Heart right ventricle (tissue), 16 donors: ENCODE measurements at regions of chr4 and their contacts with region 1.

Region 1: DNA sequence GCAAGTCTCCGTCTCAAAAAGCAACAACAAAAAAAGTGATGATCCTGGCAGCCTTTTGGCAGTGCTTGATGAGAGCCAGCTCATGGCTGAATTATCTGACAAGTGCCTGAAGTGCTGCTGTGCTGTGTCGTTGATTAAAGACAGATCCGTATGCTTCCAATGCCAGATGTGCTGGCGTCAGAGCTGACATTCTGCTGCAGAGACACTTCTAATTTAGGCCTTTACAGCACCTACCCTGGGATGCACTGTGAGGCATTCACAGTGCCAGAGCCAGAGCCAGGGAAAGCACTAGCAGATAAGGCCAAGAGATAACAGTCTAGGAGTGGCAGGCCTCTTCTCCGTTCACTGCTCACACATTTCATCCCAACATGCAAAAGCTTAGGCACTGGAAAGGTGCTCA is 995.5 kb downstream of the RAB28 start:
- DNase-seq: peak; percentile 48 to 74
- ATAC-seq: peak; percentile 88 to 99 (median 98)
- H3K4me3 ChIP-seq: no peak overlapping the region
- H3K27ac ChIP-seq: peak overlapping the region in 9 of 10 donors; percentile 55 to 78 (median 66)
- H3K4me1 ChIP-seq: peaks cover 0 to 18% (median 2%) of the 10 kb centered on the region in 9 donors
- H3K27me3 ChIP-seq: no peaks in the 10 kb centered on the region
- CTCF ChIP-seq: no peak

Region 2: DNA sequence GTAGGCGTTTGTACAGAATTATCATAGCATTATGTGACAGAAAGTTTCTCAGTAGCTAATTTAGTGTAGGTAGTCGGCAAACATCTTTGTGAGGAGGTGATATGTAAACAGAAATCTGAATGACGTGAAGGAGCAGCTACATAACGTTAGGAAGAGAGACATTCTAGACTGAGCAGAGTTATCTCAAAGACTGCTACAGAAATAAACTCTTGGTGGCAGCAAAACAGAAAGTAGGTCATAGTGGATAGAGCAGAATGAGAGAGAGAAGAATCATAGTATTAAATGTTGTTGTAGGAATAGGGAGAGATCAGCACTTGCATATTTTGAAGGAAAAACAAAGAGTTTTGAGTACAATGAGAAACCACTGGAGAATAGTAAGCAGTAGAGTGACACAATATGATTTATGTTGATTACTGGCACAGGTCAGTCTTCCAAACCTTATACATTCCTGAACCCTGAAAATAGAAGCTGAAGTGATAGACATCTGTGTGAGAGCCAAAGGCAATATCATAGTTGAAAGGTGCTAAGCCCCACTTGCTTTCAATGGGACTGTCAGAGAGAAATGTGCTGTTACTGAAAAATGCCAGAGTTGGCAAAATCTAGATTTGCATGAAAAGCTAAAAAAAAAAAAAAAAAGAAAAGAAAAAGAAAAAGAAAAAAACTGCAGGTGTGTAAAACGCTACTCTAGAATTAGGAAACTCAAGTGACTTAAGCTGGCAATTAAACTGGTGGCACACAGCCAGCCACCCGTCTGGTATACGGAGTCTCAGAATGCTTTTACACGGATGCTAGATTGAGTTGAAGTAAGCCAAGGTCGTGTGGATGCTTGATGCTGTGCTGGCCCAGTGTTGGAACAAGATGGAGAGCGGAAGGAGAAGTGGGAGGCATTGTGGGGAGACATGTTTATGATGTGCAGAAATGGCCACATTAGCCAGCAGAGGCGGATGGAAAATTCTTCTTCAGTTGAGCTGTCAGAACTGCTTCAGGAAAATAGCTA is 309.8 kb before region 1 on chr4:
- intact Hi-C with region 1: loop called in 1 of 10 experiments (anchors 10 kb)
- DNase-seq: peak in 1 of 2 donors; percentile 21
- ATAC-seq: peak in 6 of 8 donors; percentile 34 to 83 (median 62)
- H3K4me3 ChIP-seq: no peak overlapping the region
- H3K27ac ChIP-seq: peak overlapping the region in 1 of 10 donors; percentile 15
- H3K4me1 ChIP-seq: no peaks in the 10 kb centered on the region
- H3K27me3 ChIP-seq: no peaks in the 10 kb centered on the region
- CTCF ChIP-seq: peak in 1 of 9 donors; percentile 16

Region 3: DNA sequence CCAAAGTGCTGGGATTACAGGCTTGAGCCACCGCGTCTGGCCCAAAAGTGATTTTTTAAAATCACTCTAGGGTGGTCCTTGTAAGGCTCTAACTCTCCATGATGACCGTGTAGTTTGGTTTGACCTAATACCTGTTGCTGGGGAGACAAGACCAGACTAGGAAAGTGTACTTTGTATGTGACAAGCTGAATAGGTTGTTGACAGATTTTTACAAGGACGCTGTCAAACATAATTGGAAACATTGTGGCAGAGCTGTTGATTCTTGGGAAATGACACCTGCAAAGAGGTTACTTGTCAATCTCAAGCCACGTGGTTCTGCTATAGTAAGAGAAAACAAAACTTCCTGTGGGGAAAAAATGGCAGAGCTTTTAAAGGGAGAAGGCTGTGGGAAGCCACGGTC is 257.6 kb before region 1 on chr4:
- intact Hi-C with region 1: loop called in 1 of 10 experiments (anchors 1 kb)
- DNase-seq: no peak
- ATAC-seq: peak in 6 of 8 donors; percentile 30 to 94 (median 84)
- H3K4me3 ChIP-seq: no peak overlapping the region
- H3K27ac ChIP-seq: peak overlapping the region in 1 of 10 donors; percentile 20
- H3K4me1 ChIP-seq: no peaks in the 10 kb centered on the region
- H3K27me3 ChIP-seq: no peaks in the 10 kb centered on the region
- CTCF ChIP-seq: no peak

Region 4: GRCh38 chr4:12393631-12394262 is 94.9 kb before region 1 on chr4:
- intact Hi-C with region 1: loop called in 1 of 10 experiments (anchors 5 kb)
- DNase-seq: no peak
- ATAC-seq: peak in 4 of 8 donors; percentile 46 to 61 (median 54)
- H3K4me3 ChIP-seq: no peak overlapping the region
- H3K27ac ChIP-seq: peak overlapping the region in 3 of 10 donors; percentile 16 to 27 (median 17)
- H3K4me1 ChIP-seq: no peaks in the 10 kb centered on the region
- H3K27me3 ChIP-seq: no peaks in the 10 kb centered on the region
- CTCF ChIP-seq: no peak

Region 5: DNA sequence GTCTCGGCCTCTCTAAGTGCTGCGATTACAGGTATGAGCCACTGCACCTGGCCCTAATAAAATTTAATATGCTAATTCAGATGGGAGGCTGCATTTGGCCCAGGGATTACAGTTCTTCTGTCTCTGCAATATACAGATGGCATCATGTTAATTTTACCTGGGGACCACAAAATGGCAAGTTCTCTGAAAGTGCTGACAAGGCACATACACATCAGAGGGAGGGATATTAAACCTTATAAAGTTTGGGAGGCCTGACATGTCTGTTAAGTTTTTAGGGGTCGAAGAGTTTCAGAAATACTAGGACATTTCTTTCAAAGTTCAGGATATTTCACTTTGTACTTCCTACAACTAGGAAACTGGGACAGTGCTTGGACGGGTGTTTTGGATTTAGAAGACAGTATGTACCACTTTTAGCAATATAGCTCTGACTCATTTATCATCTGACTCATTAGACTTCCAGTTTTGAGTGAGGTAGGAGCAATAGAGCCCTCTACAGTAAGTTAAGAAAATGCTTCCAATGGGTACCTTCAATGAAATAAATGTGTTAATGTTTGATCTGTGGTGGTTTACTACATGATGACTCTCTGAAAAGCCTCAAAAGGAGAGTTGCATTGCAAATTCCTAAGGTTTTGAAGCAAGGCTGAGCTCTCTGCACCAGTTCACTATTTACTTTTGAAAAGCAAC is 79.0 kb before region 1 on chr4:
- intact Hi-C with region 1: loop called in 1 of 10 experiments (anchors 5 kb)
- DNase-seq: no peak
- ATAC-seq: peak in 4 of 8 donors; percentile 52 to 75 (median 62)
- H3K4me3 ChIP-seq: no peak overlapping the region
- H3K27ac ChIP-seq: no peak overlapping the region
- H3K4me1 ChIP-seq: peaks cover 0 to 3% (median 0%) of the 10 kb centered on the region in 9 donors
- H3K27me3 ChIP-seq: no peaks in the 10 kb centered on the region
- CTCF ChIP-seq: peak in 2 of 9 donors; percentile 16 to 25

Region 6: GRCh38 chr4:12562021-12562420 is 73.3 kb after region 1 on chr4:
- intact Hi-C with region 1: loop called in 1 of 10 experiments (anchors 5 kb)
- DNase-seq: no peak
- ATAC-seq: no peak
- H3K4me3 ChIP-seq: peak overlapping the region in 4 of 10 donors; percentile 5 to 32 (median 22)
- H3K27ac ChIP-seq: peak overlapping the region in 4 of 10 donors; percentile 45 to 57 (median 51)
- H3K4me1 ChIP-seq: peaks cover 0 to 8% (median 0%) of the 10 kb centered on the region in 9 donors
- H3K27me3 ChIP-seq: no peaks in the 10 kb centered on the region
- CTCF ChIP-seq: no peak